ENCODE measurements at regions of chr21 and their contacts with region 1.

Region 1: DNA sequence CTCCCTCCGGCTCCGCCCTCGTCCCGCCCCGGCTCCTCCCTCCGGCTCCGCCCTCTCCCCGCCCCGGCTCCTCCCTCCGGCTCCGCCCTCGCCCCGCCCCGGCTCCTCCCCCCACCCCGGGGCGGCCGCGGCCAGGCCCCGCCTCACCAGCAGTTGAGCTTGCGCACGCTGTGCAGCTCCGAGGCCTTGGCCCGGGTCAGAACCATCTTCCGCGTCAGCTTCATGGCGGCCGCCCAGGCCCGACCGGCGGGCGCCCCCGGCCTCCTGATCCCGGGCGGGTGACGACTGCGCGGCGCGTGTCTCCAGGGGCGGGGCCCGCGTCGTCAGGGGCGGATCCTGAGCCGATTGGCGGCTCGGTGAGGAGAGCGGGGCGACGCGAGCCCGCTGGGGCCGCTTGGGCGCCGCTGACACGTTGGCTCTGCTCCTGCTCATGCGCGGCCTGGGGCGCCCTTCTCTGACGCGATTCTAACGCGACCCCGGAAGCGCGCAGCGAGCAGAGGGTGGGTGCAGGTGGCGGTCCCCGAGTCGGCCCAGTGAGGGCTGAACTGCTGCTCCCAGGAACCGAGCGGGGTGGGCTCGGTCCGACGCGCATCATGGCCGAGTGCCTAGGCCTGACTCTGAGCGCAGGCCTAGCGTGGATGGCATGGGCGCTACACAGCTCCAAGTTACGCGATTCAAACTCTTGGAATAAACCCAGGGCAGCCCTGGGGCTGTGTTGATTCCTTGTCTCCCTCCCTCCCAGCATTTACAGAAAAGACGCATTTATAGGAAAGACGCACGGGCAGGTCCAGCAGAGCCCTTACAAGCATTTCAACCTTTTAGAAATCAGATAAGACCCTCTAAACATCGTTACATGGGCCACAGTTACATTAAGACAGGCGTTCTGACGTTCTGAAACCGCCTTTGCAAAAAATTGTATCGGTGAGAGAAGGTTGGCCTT is at the start of gene CFAP410:
- DNase-seq: peak; percentile 88 to 93
- ATAC-seq: peak; percentile 90 to 92
- H3K4me3 ChIP-seq: peak within 1 kb of the TSS; percentile 80 to 96 (median 88)
- H3K27ac ChIP-seq: peak within 1 kb of the TSS; percentile 83 to 98 (median 96)
- H3K4me1 ChIP-seq: peaks cover 9 to 16% of the 10 kb centered on the region in 2 donors
- H3K27me3 ChIP-seq: no peaks in the 10 kb centered on the region
- CTCF ChIP-seq: peak in 1 of 5 experiments; percentile 31
- POLR2A ChIP-seq: peak; percentile 84 to 94
- total RNA-seq, gene CFAP410: 10.6 to 23.0 (median 20.0) TPM

Region 2: DNA sequence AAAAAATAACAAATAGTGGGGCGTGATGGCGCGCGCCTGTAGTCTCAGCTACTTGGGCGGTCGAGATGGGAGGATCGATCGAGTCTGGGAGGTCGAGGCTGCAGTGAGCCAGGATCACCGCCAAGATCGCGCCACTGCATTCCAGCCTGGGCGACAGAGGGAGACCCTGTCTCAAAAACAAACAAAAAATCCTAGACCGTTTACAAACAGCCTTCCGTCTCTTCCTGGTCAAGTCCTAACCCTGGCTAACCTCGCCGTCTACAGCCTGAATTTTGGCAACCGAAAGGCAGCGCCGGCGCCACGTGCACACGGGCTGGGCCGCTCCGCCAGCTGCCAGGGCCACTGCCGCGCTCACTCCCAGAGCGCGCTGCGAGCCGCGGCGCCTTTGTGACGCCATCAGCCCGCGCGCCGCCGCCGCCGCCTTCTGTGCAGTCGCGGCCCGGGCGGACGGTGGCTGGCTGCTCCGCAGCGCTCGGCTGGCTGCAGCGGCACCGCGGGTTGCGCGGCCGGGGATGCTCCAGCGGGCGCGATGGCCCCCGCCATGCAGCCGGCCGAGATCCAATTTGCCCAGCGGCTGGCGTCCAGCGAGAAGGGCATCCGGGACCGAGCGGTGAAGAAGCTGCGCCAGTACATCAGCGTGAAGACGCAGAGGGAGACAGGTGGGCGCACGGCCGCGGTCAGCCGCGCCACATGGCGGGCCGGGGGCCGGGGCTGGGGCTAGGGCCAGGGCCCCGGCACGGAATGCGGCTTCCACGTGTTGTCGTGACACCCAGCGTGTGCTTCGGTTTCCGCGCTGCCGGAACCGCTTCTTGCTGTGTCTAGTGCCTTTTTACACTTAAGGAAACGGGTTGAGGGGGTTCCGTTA is 679.9 kb before region 1 on chr21 and contains the starts of genes HSF2BP and RRP1B:
- in situ Hi-C with region 1: no loop called
- intact Hi-C with region 1: no loop called
- DNase-seq: peak; percentile 51 to 73
- ATAC-seq: peak; percentile 92
- H3K4me3 ChIP-seq: peak within 1 kb of the TSS; percentile 74 to 98 (median 88)
- H3K27ac ChIP-seq: peak within 1 kb of the TSS; percentile 74 to 90 (median 88)
- H3K4me1 ChIP-seq: peaks cover 17 to 19% of the 10 kb centered on the region in 2 donors
- H3K27me3 ChIP-seq: no peaks in the 10 kb centered on the region
- CTCF ChIP-seq: peak in 4 of 5 experiments; percentile 7 to 37 (median 26)
- POLR2A ChIP-seq: peak; percentile 55 to 79
- total RNA-seq, gene HSF2BP: 0.63 TPM in 1 of 4 donors, not detected in the others
- total RNA-seq, gene RRP1B: 12.5 to 24.7 (median 18.9) TPM

Region 3: DNA sequence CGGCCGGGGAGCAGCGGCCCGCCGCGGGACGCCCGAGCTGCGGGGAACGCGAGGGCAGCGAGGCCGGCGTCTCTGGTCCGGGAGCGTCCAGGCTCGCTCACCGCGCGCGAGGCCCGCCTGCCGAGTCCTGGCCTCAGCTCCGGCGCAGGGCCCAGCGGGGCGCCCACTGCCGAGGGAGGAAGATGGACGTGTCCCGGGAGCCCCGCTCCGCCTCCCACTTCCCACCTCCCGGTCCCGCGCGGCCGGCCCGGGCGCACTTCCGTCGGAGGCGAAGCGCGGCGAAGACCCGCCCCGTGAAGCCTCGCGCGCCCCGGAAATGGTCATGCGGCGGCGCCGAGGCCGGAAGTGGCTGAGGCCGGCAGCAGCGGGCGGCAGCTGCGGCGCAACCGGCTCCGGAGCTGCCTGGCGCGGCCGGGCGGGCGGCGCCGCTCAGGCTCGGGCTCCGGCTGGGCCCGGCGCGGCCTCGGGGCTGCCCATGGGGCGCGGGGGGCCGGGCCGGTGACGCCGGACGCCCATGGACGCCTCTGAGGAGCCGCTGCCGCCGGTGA is 327.2 kb before region 1 on chr21 and contains the start of gene TRAPPC10:
- in situ Hi-C with region 1: no loop called
- intact Hi-C with region 1: loop called (anchors 2 kb)
- DNase-seq: peak; percentile 67 to 78
- ATAC-seq: peak; percentile 91 to 92
- H3K4me3 ChIP-seq: peak within 1 kb of the TSS; percentile 69 to 96 (median 94)
- H3K27ac ChIP-seq: peak within 1 kb of the TSS; percentile 84 to 98 (median 98)
- H3K4me1 ChIP-seq: peaks cover 36 to 43% of the 10 kb centered on the region in 2 donors
- H3K27me3 ChIP-seq: no peaks in the 10 kb centered on the region
- CTCF ChIP-seq: peak in 1 of 5 experiments; percentile 5
- POLR2A ChIP-seq: peak; percentile 92 to 98
- total RNA-seq, gene TRAPPC10: 17.9 to 32.9 (median 23.1) TPM

Region 4: GRCh38 chr21:44444286-44444931 is 105.2 kb after region 1 on chr21:
- in situ Hi-C with region 1: no loop called
- intact Hi-C with region 1: no loop called
- DNase-seq: no peak
- ATAC-seq: no peak
- H3K4me3 ChIP-seq: no peak overlapping the region
- H3K27ac ChIP-seq: no peak overlapping the region
- H3K4me1 ChIP-seq: no peaks in the 10 kb centered on the region
- H3K27me3 ChIP-seq: peaks cover 0 to 9% (median 7%) of the 10 kb centered on the region in 3 donors
- CTCF ChIP-seq: no peak
- POLR2A ChIP-seq: no peak

Region 5: GRCh38 chr21:44792702-44793591 is 453.7 kb after region 1 on chr21:
- in situ Hi-C with region 1: loop called in 1 of 4 experiments (anchors 25 kb)
- intact Hi-C with region 1: no loop called
- DNase-seq: peak in 1 of 2 donors; percentile 30
- ATAC-seq: peak; percentile 84 to 85
- H3K4me3 ChIP-seq: no peak overlapping the region
- H3K27ac ChIP-seq: no peak overlapping the region
- H3K4me1 ChIP-seq: peaks cover 13 to 35% of the 10 kb centered on the region in 2 donors
- H3K27me3 ChIP-seq: no peaks in the 10 kb centered on the region
- CTCF ChIP-seq: peak; percentile 48 to 81 (median 65)
- POLR2A ChIP-seq: no peak

Region 6: GRCh38 chr21:44845399-44846223 is 506.4 kb after region 1 on chr21:
- in situ Hi-C with region 1: no loop called
- intact Hi-C with region 1: no loop called
- DNase-seq: peak in 1 of 2 donors; percentile 58
- ATAC-seq: peak; percentile 39 to 63
- H3K4me3 ChIP-seq: peak overlapping the region; percentile 21 to 54 (median 30)
- H3K27ac ChIP-seq: peak overlapping the region in 3 of 4 donors; percentile 26 to 43 (median 41)
- H3K4me1 ChIP-seq: peaks cover 16 to 21% of the 10 kb centered on the region in 2 donors
- H3K27me3 ChIP-seq: peaks cover 8 to 13% (median 13%) of the 10 kb centered on the region in 3 donors
- CTCF ChIP-seq: peak in 2 of 5 experiments; percentile 34 to 46
- POLR2A ChIP-seq: no peak

Region 7: DNA sequence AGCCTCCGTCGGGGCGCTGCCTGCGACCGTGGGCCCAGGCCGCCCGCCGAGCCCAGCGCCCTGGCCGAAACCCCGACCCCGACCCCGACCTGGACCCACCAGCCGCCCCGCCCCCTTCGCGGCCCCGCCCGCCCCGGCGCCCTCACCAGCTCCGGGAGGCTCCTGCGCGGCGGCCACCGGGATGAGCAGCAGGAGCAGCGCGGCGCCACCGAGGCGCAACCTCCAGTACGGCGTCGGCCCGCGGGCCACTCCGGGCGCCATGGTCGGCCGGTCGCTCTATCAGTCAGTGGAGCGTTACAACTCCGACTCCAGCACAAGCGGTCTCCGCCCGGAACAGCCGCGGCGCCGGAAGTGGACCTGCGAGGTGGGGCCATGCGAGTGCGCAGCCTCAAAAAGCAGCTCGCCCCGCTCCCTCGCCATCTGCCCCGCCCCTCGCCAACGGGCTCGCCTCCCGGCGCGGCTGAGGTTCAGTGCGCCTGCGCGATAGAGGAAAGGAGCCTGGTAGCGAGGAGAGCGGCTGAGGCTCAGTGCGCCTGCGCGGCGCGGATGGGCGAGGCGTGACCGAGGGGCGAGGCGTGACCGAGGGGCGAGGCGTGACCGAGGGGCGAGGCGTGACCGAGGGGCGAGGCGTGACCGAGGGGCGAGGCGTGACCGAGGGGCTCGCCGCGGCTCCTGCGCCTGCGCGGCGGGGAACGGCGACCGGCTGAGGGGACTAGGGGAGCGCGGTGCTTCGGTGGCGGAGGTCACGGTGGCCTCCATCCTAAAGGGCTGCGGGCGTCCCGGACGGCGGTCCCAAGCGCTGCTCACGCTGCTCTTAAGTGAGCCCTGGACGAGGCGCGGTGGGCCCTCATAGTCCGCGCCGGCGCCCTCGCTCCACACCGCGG is 534.4 kb after region 1 on chr21 and contains the start of gene PTTG1IP:
- in situ Hi-C with region 1: no loop called
- intact Hi-C with region 1: loop called (anchors 2 kb)
- DNase-seq: peak; percentile 97 to 99
- ATAC-seq: peak; percentile 52 to 54
- H3K4me3 ChIP-seq: peak within 1 kb of the TSS; percentile 74 to 87 (median 82)
- H3K27ac ChIP-seq: peak within 1 kb of the TSS; percentile 95
- H3K4me1 ChIP-seq: peaks cover 58% of the 10 kb centered on the region in 2 donors
- H3K27me3 ChIP-seq: no peaks in the 10 kb centered on the region
- CTCF ChIP-seq: no peak
- POLR2A ChIP-seq: peak; percentile 95 to 96
- total RNA-seq, gene PTTG1IP: 116 to 217 (median 127) TPM